CD4-positive, alpha-beta T cell (primary cell): ENCODE measurements at regions of chr16 and their contacts with region 1.

Region 1: GRCh38 chr16:20763461-20764232 is at the start of gene ACSM3:
- DNase-seq: peak; percentile 34 to 89 (median 48)
- ATAC-seq: peak; percentile 98
- H3K4me3 ChIP-seq: peak within 1 kb of the TSS; percentile 65
- H3K4me3 Mint-ChIP-seq: peak within 1 kb of the TSS; percentile 89
- H3K27ac ChIP-seq: peak within 1 kb of the TSS; percentile 49 to 57
- H3K27ac Mint-ChIP-seq: peak within 1 kb of the TSS; percentile 80
- H3K4me1 ChIP-seq: peaks cover 20% of the 10 kb centered on the region
- H3K4me1 Mint-ChIP-seq: peaks cover 26% of the 10 kb centered on the region
- H3K27me3 ChIP-seq: no peaks in the 10 kb centered on the region
- H3K27me3 Mint-ChIP-seq: no peaks in the 10 kb centered on the region
- CTCF ChIP-seq: no peak
- total RNA-seq, gene ACSM3: 4.6 to 6.2 TPM

Region 2: GRCh38 chr16:20741554-20742285 is 21.9 kb before region 1 on chr16 and contains the start of gene THUMPD1:
- CTCF ChIA-PET with region 1: interaction called, 10 read pairs
- POLR2A ChIA-PET with region 1: interaction called, 30 read pairs
- intact Hi-C with region 1: loop called (anchors 1 kb)
- DNase-seq: peak; percentile 94 to 99 (median 98)
- ATAC-seq: peak; percentile 92
- H3K4me3 ChIP-seq: peak within 1 kb of the TSS; percentile 100
- H3K4me3 Mint-ChIP-seq: peak within 1 kb of the TSS; percentile 97
- H3K27ac ChIP-seq: peak within 1 kb of the TSS; percentile 99 to 100
- H3K27ac Mint-ChIP-seq: peak within 1 kb of the TSS; percentile 99
- H3K4me1 ChIP-seq: peaks cover 35% of the 10 kb centered on the region
- H3K4me1 Mint-ChIP-seq: peaks cover 34% of the 10 kb centered on the region
- H3K27me3 ChIP-seq: no peaks in the 10 kb centered on the region
- H3K27me3 Mint-ChIP-seq: no peaks in the 10 kb centered on the region
- CTCF ChIP-seq: no peak
- total RNA-seq, gene THUMPD1: 105 to 107 TPM

Region 3: DNA sequence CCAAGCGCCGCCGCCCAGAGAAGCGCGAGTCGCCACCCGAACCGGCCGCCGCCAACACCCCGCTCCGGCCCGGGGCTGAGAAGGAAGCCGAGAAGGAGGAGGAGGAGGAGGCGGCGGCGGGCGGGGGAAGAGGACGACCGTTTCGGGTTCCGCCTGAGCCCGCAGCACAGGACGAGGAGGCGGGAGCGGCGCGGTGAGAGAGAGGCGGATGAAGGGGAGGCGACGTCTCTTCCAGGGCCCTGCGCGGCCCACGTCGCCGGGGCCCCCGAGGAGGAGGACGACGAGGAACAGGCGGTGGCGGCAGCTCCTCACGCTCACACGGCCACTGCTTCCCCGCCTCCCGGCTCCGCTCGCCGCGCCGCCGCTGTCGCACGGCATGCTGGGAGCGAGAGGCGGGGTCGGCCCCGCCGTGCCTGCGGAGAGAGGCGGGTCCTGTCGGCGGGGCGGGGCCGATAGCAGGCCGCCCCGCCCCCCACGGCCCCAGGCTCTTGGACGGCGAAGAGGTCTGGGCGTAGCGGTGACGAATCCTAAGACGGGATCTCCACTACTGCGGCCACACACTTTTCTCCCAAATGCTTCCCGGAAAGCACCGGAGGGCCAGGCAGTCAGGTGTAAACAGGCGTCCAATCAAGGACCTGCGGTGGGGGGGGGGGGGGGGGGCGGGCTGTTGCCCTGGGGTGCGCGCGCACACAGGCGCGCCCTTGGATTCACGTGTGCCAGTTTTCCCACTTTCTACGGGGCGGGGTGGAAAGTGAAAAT is 738.4 kb after region 1 on chr16:
- CTCF ChIA-PET with region 1: no interaction called
- POLR2A ChIA-PET with region 1: no interaction called
- intact Hi-C with region 1: loop called in 1 of 2 experiments (anchors 10 kb)
- DNase-seq: peak; percentile 78 to 96 (median 88)
- ATAC-seq: peak; percentile 82
- H3K4me3 ChIP-seq: peak overlapping the region; percentile 80
- H3K4me3 Mint-ChIP-seq: peak overlapping the region; percentile 92
- H3K27ac ChIP-seq: peak overlapping the region; percentile 95 to 98
- H3K27ac Mint-ChIP-seq: peak overlapping the region; percentile 90
- H3K4me1 ChIP-seq: peaks cover 32% of the 10 kb centered on the region
- H3K4me1 Mint-ChIP-seq: peaks cover 21% of the 10 kb centered on the region
- H3K27me3 ChIP-seq: no peaks in the 10 kb centered on the region
- H3K27me3 Mint-ChIP-seq: no peaks in the 10 kb centered on the region
- CTCF ChIP-seq: no peak